MCF 10A (cell line): ENCODE measurements at regions of chr4 and their contacts with region 1.

Region 1: GRCh38 chr4:118865091-118865708 is 23.5 kb upstream of the SYNPO2 start:
- DNase-seq: peak; percentile 73
- H3K4me3 Mint-ChIP-seq: no peak overlapping the region
- H3K27ac Mint-ChIP-seq: no peak overlapping the region
- H3K4me1 Mint-ChIP-seq: no peaks in the 10 kb centered on the region
- H3K27me3 Mint-ChIP-seq: no peaks in the 10 kb centered on the region
- CTCF ChIP-seq: peak; percentile 67

Region 2: DNA sequence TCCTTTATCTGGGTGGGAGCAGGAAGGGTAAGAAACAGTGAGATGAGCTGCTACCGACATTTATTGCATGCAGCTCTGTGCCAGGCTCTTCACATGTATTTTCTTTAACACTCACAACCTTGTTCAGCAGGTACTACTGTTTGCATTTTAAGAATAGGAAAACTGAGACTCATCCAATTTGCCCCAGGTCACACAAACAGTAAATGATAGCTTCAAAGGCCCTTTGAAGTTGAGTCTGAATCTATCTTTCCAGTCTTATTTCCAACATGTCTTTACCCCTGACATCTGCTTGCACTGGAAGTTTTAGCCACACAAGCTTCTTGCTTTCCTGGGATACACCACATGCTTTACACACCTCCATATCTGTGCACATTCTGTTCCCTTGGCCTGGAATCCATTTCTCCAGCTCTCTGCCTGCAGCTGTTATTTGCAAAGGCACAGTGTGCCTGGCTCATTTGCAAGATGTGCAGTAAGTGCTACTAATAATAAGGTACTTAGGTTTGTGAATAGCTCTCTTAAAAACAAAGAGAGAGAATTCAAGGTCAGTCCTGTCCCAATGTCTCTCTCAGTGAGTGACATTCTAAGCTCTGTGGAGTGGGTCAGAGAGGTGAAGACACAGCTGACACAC is 118.8 kb before region 1 on chr4:
- CTCF ChIA-PET with region 1: interaction called, 16 read pairs
- POLR2A ChIA-PET with region 1: no interaction called
- intact Hi-C with region 1: no loop called
- DNase-seq: no peak
- H3K4me3 Mint-ChIP-seq: no peak overlapping the region
- H3K27ac Mint-ChIP-seq: no peak overlapping the region
- H3K4me1 Mint-ChIP-seq: no peaks in the 10 kb centered on the region
- H3K27me3 Mint-ChIP-seq: no peaks in the 10 kb centered on the region
- CTCF ChIP-seq: no peak

Region 3: DNA sequence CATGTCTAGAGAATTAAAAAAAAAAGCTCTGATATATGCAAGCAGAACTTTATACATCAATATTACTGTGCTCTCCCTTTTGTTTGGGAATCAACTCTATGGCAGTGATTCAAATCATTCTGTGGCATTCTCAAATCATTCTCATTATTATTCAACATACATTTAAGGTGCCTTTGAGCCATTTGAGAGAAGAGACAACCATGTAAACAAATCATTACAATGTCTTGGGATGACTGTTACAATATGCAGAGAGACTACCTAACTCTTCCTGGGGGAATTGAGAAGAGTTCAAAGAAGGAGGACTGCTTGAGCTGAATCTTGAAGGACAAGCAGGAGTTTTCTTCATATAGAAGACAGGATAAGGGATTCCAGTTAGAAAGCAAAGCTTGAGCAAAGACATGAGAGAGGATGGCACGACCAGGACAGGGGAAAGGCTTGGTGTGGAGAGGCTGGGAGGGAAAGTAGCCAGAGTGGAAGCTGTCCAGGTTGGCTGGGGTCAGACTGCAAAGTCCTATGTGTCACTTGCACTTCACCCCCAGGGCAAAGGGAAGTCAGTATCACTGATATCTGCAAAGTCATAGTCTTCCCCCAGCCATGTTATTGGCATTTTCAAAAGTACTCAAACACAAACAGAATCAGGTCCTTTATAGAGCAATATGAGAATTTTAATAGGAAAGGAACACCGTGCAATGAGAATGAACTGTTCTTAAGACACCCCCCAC is 38.3 kb before region 1 on chr4:
- CTCF ChIA-PET with region 1: interaction called, 11 read pairs
- POLR2A ChIA-PET with region 1: interaction called, 4 read pairs
- intact Hi-C with region 1: no loop called
- DNase-seq: no peak
- H3K4me3 Mint-ChIP-seq: peak overlapping the region; percentile 4
- H3K27ac Mint-ChIP-seq: peak overlapping the region; percentile 8
- H3K4me1 Mint-ChIP-seq: peaks cover 48% of the 10 kb centered on the region
- H3K27me3 Mint-ChIP-seq: no peaks in the 10 kb centered on the region
- CTCF ChIP-seq: no peak

Region 4: GRCh38 chr4:118845552-118846055 is 19.6 kb before region 1 on chr4:
- CTCF ChIA-PET with region 1: interaction called, 58 read pairs
- POLR2A ChIA-PET with region 1: interaction called, 5 read pairs
- intact Hi-C with region 1: no loop called
- DNase-seq: no peak
- H3K4me3 Mint-ChIP-seq: no peak overlapping the region
- H3K27ac Mint-ChIP-seq: no peak overlapping the region
- H3K4me1 Mint-ChIP-seq: peaks cover 12% of the 10 kb centered on the region
- H3K27me3 Mint-ChIP-seq: no peaks in the 10 kb centered on the region
- CTCF ChIP-seq: no peak

Region 5: DNA sequence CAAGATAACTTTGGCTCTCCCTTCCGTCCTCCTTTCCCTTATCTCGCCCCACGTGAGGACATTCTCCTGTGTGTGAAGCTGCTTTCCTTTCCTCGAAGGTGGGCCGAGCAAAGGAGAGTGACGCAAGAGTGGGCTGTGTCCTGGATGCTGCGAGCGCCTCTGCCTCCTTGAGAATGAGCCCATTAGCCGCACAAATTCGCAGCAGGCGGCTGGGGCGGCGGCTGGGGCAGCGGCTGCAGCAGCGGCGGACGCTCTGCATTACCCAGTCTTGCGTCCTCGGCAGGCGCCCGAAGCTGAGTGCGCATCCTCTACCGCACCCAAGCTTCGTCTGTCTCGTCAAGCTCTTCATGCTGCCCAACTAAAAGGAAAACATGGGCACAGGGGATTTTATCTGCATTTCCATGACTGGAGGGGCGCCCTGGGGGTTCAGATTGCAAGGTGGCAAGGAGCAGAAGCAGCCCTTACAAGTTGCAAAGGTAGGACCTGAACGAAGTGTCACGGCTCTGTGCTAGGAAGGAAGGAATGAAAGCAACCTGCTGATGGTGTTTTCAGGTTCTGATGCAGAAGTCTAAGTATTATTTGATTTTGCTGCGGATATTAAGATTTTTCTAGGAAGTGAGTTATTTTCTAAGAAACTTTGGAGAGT is 23.6 kb after region 1 on chr4 and contains the start of gene SYNPO2:
- CTCF ChIA-PET with region 1: interaction called, 10 read pairs
- POLR2A ChIA-PET with region 1: no interaction called
- intact Hi-C with region 1: no loop called
- DNase-seq: peak; percentile 63
- H3K4me3 Mint-ChIP-seq: peak within 1 kb of the TSS; percentile 67
- H3K27ac Mint-ChIP-seq: no peak within 1 kb of the TSS
- H3K4me1 Mint-ChIP-seq: peaks cover 14% of the 10 kb centered on the region
- H3K27me3 Mint-ChIP-seq: no peaks in the 10 kb centered on the region
- CTCF ChIP-seq: no peak
- total RNA-seq, gene SYNPO2: 0.42 and 0.61 TPM in 2 replicates

Region 6: GRCh38 chr4:119005928-119006460 is 140.8 kb after region 1 on chr4:
- CTCF ChIA-PET with region 1: no interaction called
- POLR2A ChIA-PET with region 1: no interaction called
- intact Hi-C with region 1: no loop called
- DNase-seq: no peak
- H3K4me3 Mint-ChIP-seq: no peak overlapping the region
- H3K27ac Mint-ChIP-seq: no peak overlapping the region
- H3K4me1 Mint-ChIP-seq: no peaks in the 10 kb centered on the region
- H3K27me3 Mint-ChIP-seq: no peaks in the 10 kb centered on the region
- CTCF ChIP-seq: no peak

Region 7: DNA sequence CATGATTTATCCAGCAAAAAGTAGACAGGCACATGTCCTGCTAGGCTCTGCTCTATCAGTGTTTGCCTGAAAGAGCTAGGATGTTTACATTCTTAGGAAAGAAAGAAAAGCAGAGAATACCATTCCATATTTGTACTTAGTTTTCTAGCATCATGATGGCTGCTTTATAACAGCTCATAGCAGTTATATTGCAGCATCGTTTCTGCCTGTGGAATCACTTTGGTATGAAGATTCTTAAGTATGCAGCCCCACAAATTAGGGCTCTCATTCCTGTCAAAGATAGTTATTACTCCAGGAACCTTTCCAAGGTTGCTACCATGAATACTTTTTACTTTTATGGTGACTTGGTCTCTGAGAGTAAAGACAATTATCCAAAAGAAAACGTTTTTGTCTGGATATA is 151.4 kb after region 1 on chr4:
- CTCF ChIA-PET with region 1: no interaction called
- POLR2A ChIA-PET with region 1: no interaction called
- intact Hi-C with region 1: no loop called
- DNase-seq: no peak
- H3K4me3 Mint-ChIP-seq: no peak overlapping the region
- H3K27ac Mint-ChIP-seq: no peak overlapping the region
- H3K4me1 Mint-ChIP-seq: no peaks in the 10 kb centered on the region
- H3K27me3 Mint-ChIP-seq: no peaks in the 10 kb centered on the region
- CTCF ChIP-seq: no peak

Region 8: DNA sequence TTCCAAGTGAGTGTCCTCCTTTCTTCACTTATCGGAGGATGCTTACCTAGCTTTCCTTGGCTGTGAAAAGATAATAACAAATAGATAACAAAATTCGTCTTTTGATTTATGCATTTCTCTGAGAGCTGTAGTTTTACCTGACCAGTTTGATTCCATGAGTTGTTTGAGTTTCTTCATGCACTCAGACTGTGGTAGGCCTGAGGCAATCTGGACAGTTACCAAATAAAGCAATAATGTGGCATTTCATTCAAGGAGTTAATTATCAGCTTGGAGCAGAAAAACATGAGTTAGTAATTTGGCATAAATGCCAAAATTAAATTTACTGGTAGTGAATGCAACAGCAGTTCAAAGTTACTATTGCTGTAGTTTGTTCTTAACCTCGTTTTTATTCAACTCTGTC is 403.3 kb after region 1 on chr4:
- CTCF ChIA-PET with region 1: no interaction called
- POLR2A ChIA-PET with region 1: no interaction called
- intact Hi-C with region 1: no loop called
- DNase-seq: peak; percentile 31
- H3K4me3 Mint-ChIP-seq: no peak overlapping the region
- H3K27ac Mint-ChIP-seq: no peak overlapping the region
- H3K4me1 Mint-ChIP-seq: peaks cover 6% of the 10 kb centered on the region
- H3K27me3 Mint-ChIP-seq: no peaks in the 10 kb centered on the region
- CTCF ChIP-seq: no peak